ENCODE measurements at regions of chr1 and their contacts with region 1.

Region 1: GRCh38 chr1:13667691-13668090 is 32.3 kb upstream of the PRDM2 start:
- DNase-seq: peak; percentile 86
- ATAC-seq: peak; percentile 66
- H3K4me3 ChIP-seq: peak overlapping the region in 1 of 5 experiments; percentile 43
- H3K4me3 Mint-ChIP-seq: peak overlapping the region; percentile 87
- H3K27ac ChIP-seq: peak overlapping the region; percentile 78 to 84
- H3K27ac Mint-ChIP-seq: peak overlapping the region; percentile 95
- H3K4me1 ChIP-seq: peaks cover 34 to 35% of the 10 kb centered on the region in 2 donors
- H3K4me1 Mint-ChIP-seq: peaks cover 52% of the 10 kb centered on the region
- H3K27me3 ChIP-seq: no peaks in the 10 kb centered on the region
- H3K27me3 Mint-ChIP-seq: no peaks in the 10 kb centered on the region
- CTCF ChIP-seq: no peak

Region 2: GRCh38 chr1:13642306-13643004 is 25.2 kb before region 1 on chr1:
- CTCF ChIA-PET with region 1: interaction called, 3 read pairs
- POLR2A ChIA-PET with region 1: interaction called, 4 read pairs
- intact Hi-C with region 1: loop called (anchors 2 kb)
- DNase-seq: peak; percentile 80
- ATAC-seq: peak; percentile 90
- H3K4me3 ChIP-seq: peak overlapping the region in 1 of 5 experiments; percentile 1
- H3K4me3 Mint-ChIP-seq: peak overlapping the region; percentile 83
- H3K27ac ChIP-seq: peak overlapping the region; percentile 44 to 77
- H3K27ac Mint-ChIP-seq: peak overlapping the region; percentile 88
- H3K4me1 ChIP-seq: peaks cover 18 to 19% of the 10 kb centered on the region in 2 donors
- H3K4me1 Mint-ChIP-seq: peaks cover 36% of the 10 kb centered on the region
- H3K27me3 ChIP-seq: peaks cover 0 to 2% (median 0%) of the 10 kb centered on the region in 4 experiments
- H3K27me3 Mint-ChIP-seq: no peaks in the 10 kb centered on the region
- CTCF ChIP-seq: no peak

Region 3: DNA sequence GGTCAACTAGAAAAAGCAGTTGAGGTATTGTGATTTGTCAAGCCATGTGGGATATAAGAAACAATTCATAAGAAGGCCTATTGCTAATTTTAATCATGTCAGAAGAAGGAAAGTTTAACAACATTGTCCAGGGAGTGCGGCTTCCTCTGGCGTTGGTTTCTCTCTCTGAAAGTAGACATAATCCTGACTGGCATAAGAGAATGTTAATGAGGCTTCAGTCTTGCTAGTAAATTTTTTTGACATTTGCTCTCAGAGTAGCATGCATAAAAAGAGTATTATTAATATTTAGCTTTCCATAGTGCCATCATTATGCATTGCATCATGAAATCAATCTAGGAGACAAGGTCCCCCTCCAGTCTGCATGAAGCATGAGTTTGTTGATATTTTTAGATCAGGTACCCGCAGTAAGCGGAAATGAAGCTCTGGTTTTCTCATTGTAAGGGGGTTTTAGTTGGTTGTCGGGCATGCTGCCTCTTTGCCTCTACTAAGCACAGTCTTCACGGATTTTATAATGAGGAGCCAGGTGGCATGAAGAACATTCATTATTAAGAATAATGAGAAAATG is 19.5 kb after region 1 on chr1:
- CTCF ChIA-PET with region 1: no interaction called
- POLR2A ChIA-PET with region 1: no interaction called
- intact Hi-C with region 1: no loop called
- DNase-seq: peak; percentile 36
- ATAC-seq: no peak
- H3K4me3 ChIP-seq: no peak overlapping the region
- H3K4me3 Mint-ChIP-seq: peak overlapping the region; percentile 7
- H3K27ac ChIP-seq: peak overlapping the region in 1 of 2 donors; percentile 41
- H3K27ac Mint-ChIP-seq: no peak overlapping the region
- H3K4me1 ChIP-seq: no peaks in the 10 kb centered on the region
- H3K4me1 Mint-ChIP-seq: peaks cover 8% of the 10 kb centered on the region
- H3K27me3 ChIP-seq: no peaks in the 10 kb centered on the region
- H3K27me3 Mint-ChIP-seq: no peaks in the 10 kb centered on the region
- CTCF ChIP-seq: no peak

Region 4: DNA sequence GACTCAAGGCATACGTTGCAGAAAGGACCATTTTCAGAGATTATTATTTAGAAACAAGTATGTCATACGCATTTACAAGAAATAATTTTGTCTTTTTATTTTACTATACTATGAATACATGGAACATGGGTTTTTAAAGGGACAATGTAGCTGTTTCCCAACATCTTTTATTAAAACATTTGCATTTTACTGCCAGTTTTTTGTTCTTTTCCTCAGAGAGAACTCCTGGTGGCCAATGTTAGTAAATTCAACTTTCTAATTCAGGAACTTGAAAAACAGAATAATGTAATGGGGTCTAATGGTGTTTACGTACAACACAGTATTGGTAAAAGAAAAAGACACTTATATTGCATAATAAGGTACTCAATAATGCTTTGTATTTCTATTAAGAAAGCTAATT is 47.2 kb after region 1 on chr1:
- CTCF ChIA-PET with region 1: interaction called, 11 read pairs
- POLR2A ChIA-PET with region 1: interaction called, 3 read pairs
- intact Hi-C with region 1: no loop called
- DNase-seq: no peak
- ATAC-seq: no peak
- H3K4me3 ChIP-seq: no peak overlapping the region
- H3K4me3 Mint-ChIP-seq: peak overlapping the region; percentile 13
- H3K27ac ChIP-seq: peak overlapping the region in 1 of 2 donors; percentile 86
- H3K27ac Mint-ChIP-seq: peak overlapping the region; percentile 27
- H3K4me1 ChIP-seq: peaks cover 36 to 38% of the 10 kb centered on the region in 2 donors
- H3K4me1 Mint-ChIP-seq: peaks cover 67% of the 10 kb centered on the region
- H3K27me3 ChIP-seq: no peaks in the 10 kb centered on the region
- H3K27me3 Mint-ChIP-seq: no peaks in the 10 kb centered on the region
- CTCF ChIP-seq: peak; percentile 65

Region 5: DNA sequence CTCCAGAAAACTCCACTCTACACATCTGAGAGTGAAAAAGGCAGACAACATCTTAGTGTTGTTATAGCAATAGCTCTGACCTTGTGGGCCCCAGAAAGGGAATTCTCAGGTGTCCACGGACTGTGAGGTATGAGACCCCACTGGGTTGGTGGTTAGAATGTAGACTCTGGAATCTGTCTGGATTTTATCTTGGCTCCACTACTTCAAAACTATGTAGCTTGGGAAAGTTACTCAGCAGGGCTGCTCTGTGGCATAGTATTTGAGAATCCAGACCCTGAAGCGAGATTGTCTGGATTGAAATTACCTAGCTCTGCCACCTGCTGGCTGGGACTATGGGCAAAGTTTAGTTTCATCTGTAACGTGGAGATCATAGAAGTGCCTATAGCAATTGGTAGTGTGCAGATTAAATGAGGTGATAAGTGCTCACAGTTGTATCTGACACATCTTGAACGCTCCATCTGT is 58.1 kb after region 1 on chr1:
- CTCF ChIA-PET with region 1: interaction called, 265 read pairs
- POLR2A ChIA-PET with region 1: interaction called, 21 read pairs
- intact Hi-C with region 1: loop called (anchors 1 kb)
- DNase-seq: peak; percentile 84
- ATAC-seq: peak; percentile 35
- H3K4me3 ChIP-seq: no peak overlapping the region
- H3K4me3 Mint-ChIP-seq: peak overlapping the region; percentile 75
- H3K27ac ChIP-seq: peak overlapping the region; percentile 62 to 98
- H3K27ac Mint-ChIP-seq: peak overlapping the region; percentile 88
- H3K4me1 ChIP-seq: peaks cover 68 to 74% of the 10 kb centered on the region in 2 donors
- H3K4me1 Mint-ChIP-seq: peaks cover 90% of the 10 kb centered on the region
- H3K27me3 ChIP-seq: no peaks in the 10 kb centered on the region
- H3K27me3 Mint-ChIP-seq: no peaks in the 10 kb centered on the region
- CTCF ChIP-seq: peak; percentile 85

Region 6: DNA sequence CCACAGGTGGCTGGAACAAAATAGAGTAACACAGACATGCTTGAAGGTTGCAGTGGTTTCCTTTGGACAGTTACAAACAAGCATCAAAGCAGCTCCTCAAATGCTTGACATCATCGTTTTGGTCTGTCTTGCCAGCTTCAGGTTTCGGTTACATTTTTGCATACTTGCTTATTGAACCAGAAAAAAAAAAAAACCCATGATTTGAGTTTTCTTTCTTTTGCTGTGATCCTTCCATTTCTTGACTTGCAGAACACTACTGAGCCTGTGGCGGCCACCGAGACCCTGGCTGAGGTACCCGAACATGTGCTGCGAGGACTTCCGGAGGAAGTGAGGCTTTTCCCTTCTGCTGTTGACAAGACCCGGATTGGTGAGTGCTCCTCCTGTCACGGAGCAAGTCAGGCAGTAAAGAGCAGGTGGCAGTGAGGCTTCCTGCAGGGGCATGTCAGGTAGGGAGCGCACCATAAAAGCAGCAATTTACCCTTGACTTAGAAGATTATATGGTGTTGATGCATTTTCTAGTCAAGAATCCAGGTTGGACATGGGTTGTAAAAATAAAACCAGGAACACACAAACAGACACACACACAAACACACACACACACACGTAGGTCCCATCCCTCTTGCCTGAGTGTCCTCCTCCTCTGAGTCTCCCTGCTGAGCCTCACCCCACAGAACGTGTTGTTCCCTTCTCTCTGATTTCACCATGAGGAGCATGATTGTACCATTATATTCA is 63.2 kb after region 1 on chr1:
- CTCF ChIA-PET with region 1: interaction called, 265 read pairs
- POLR2A ChIA-PET with region 1: interaction called, 21 read pairs
- intact Hi-C with region 1: loop called (anchors 1 kb)
- DNase-seq: peak; percentile 97
- ATAC-seq: peak; percentile 88
- H3K4me3 ChIP-seq: peak overlapping the region; percentile 12 to 51 (median 34)
- H3K4me3 Mint-ChIP-seq: peak overlapping the region; percentile 81
- H3K27ac ChIP-seq: peak overlapping the region; percentile 98 to 99
- H3K27ac Mint-ChIP-seq: peak overlapping the region; percentile 93
- H3K4me1 ChIP-seq: peaks cover 84 to 95% of the 10 kb centered on the region in 2 donors
- H3K4me1 Mint-ChIP-seq: peaks cover 96% of the 10 kb centered on the region
- H3K27me3 ChIP-seq: no peaks in the 10 kb centered on the region
- H3K27me3 Mint-ChIP-seq: no peaks in the 10 kb centered on the region
- CTCF ChIP-seq: peak; percentile 31

Region 7: DNA sequence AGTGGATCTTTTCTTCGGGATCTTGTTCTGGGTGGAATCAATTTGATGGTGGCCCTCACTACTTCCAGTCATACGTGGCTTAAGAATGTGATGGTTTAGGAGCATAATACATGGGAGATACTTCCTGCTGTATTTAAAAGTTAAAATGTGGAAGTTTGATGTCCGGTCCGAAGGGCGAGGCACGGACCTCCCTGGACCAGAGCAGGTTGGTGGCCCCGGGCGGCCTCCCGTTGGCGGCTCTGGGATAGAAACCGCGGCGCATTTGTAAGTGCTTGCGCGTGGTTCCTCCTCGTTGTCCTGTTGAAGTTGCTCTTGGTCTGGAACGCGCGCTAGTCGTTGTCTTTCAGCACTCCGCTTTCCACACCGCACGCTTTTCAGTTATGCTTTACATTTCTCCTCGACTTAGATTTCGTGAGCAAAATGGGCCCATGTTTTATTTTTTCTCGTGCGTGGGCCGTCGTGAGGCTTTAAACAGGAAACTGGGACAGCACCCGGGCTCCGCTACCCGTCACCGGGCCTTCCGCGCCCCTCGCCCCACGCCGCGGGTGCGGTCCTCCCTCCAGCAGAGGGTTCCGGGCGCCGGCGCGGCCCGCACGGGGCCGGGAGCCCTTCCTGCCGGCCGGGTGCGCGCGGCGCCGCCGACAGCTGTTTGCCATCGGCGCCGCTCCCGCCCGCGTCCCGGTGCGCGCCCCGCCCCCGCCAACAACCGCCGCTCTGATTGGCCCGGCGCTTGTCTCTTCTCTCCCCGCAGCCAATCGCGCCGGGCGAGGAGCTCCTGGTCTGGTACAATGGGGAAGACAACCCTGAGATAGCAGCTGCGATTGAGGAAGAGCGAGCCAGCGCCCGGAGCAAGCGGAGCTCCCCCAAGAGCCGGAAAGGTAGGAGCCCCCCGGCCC is 81.2 kb after region 1 on chr1:
- CTCF ChIA-PET with region 1: interaction called, 54 read pairs
- POLR2A ChIA-PET with region 1: interaction called, 8 read pairs
- intact Hi-C with region 1: loop called (anchors 1 kb)
- DNase-seq: peak; percentile 97
- ATAC-seq: peak; percentile 90
- H3K4me3 ChIP-seq: peak overlapping the region; percentile 59 to 81 (median 72)
- H3K4me3 Mint-ChIP-seq: peak overlapping the region; percentile 95
- H3K27ac ChIP-seq: peak overlapping the region; percentile 86 to 90
- H3K27ac Mint-ChIP-seq: peak overlapping the region; percentile 98
- H3K4me1 ChIP-seq: peaks cover 38 to 42% of the 10 kb centered on the region in 2 donors
- H3K4me1 Mint-ChIP-seq: peaks cover 59% of the 10 kb centered on the region
- H3K27me3 ChIP-seq: no peaks in the 10 kb centered on the region
- H3K27me3 Mint-ChIP-seq: no peaks in the 10 kb centered on the region
- CTCF ChIP-seq: peak; percentile 23

Region 8: GRCh38 chr1:13813398-13814012 is 145.8 kb after region 1 on chr1:
- CTCF ChIA-PET with region 1: interaction called, 13 read pairs
- POLR2A ChIA-PET with region 1: no interaction called
- intact Hi-C with region 1: loop called (anchors 1 kb)
- DNase-seq: peak; percentile 63
- ATAC-seq: peak; percentile 46
- H3K4me3 ChIP-seq: no peak overlapping the region
- H3K4me3 Mint-ChIP-seq: no peak overlapping the region
- H3K27ac ChIP-seq: no peak overlapping the region
- H3K27ac Mint-ChIP-seq: peak overlapping the region; percentile 10
- H3K4me1 ChIP-seq: peaks cover 0 to 12% of the 10 kb centered on the region in 2 donors
- H3K4me1 Mint-ChIP-seq: peaks cover 38% of the 10 kb centered on the region
- H3K27me3 ChIP-seq: no peaks in the 10 kb centered on the region
- H3K27me3 Mint-ChIP-seq: no peaks in the 10 kb centered on the region
- CTCF ChIP-seq: peak; percentile 67

Region 9: GRCh38 chr1:13881410-13882025 is 213.8 kb after region 1 on chr1:
- CTCF ChIA-PET with region 1: no interaction called
- POLR2A ChIA-PET with region 1: no interaction called
- intact Hi-C with region 1: no loop called
- DNase-seq: no peak
- ATAC-seq: no peak
- H3K4me3 ChIP-seq: no peak overlapping the region
- H3K4me3 Mint-ChIP-seq: no peak overlapping the region
- H3K27ac ChIP-seq: no peak overlapping the region
- H3K27ac Mint-ChIP-seq: no peak overlapping the region
- H3K4me1 ChIP-seq: no peaks in the 10 kb centered on the region
- H3K4me1 Mint-ChIP-seq: no peaks in the 10 kb centered on the region
- H3K27me3 ChIP-seq: peaks cover 0 to 11% (median under 1%) of the 10 kb centered on the region in 4 experiments
- H3K27me3 Mint-ChIP-seq: peaks cover 27% of the 10 kb centered on the region
- CTCF ChIP-seq: no peak

Measured in B cell (primary cell).